ENCODE measurements at regions of chr6 and their contacts with region 1.

Region 1: DNA sequence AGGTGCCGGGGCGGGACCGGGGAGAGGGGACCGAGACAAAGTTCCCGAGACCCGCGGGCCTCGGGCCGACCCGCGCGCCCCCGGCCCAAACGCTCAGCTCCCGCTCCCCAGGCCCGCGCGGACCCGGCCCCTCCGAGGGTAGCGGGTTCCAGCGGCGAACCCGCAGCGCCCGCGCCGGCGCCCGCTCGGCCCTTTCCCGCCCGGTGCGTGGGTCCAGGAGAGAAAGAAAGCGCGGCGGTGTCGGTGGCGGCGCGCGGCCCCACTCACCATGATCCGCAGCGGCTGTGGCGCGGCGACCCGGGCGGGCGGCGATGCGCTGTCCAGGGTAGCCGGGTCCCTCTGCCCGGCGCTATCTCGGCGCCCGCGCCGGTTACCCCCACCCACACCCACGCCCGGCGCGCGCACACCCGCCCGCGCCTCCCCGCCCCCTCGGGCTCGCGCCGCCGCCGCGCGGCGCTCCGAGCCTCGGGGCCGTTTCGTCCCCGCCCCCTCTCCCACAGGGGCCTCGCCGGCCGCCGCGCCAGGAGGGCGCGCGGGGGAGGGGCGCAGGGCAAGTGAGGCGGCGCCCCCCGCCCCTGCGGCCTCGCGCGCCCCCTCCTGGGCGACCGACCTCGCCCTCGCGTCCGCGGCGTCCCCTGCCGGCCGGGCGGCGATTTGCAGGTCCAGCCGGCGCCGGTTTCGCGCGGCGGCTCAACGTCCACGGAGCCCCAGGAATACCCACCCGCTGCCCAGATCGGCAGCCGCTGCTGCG is at the start of gene ELOVL2:
- DNase-seq: peak; percentile 5
- H3K4me3 Mint-ChIP-seq: peak within 1 kb of the TSS; percentile 76
- H3K27ac Mint-ChIP-seq: peak within 1 kb of the TSS; percentile 50
- H3K4me1 Mint-ChIP-seq: peaks cover 8% of the 10 kb centered on the region
- H3K27me3 Mint-ChIP-seq: peaks cover 69% of the 10 kb centered on the region
- total RNA-seq, gene ELOVL2: not detected in 2 replicates

Region 2: GRCh38 chr6:10886691-10887535 is 157.2 kb before region 1 on chr6 and contains the start of gene SYCP2L:
- intact Hi-C with region 1: loop called (anchors 5 kb)
- DNase-seq: no peak
- H3K4me3 Mint-ChIP-seq: no peak within 1 kb of the TSS
- H3K27ac Mint-ChIP-seq: no peak within 1 kb of the TSS
- H3K4me1 Mint-ChIP-seq: no peaks in the 10 kb centered on the region
- H3K27me3 Mint-ChIP-seq: peaks cover 63% of the 10 kb centered on the region
- total RNA-seq, gene SYCP2L: not detected in 2 replicates

Region 3: GRCh38 chr6:11009353-11009752 is 34.8 kb before region 1 on chr6:
- intact Hi-C with region 1: no loop called
- DNase-seq: no peak
- H3K4me3 Mint-ChIP-seq: no peak overlapping the region
- H3K27ac Mint-ChIP-seq: no peak overlapping the region
- H3K4me1 Mint-ChIP-seq: no peaks in the 10 kb centered on the region
- H3K27me3 Mint-ChIP-seq: peaks cover 11% of the 10 kb centered on the region

Region 4: GRCh38 chr6:11448038-11448437 is 403.9 kb after region 1 on chr6:
- intact Hi-C with region 1: no loop called
- DNase-seq: no peak
- H3K4me3 Mint-ChIP-seq: no peak overlapping the region
- H3K27ac Mint-ChIP-seq: no peak overlapping the region
- H3K4me1 Mint-ChIP-seq: peaks cover 32% of the 10 kb centered on the region
- H3K27me3 Mint-ChIP-seq: peaks cover 1% of the 10 kb centered on the region